Endothelial cell of umbilical vein (primary cell): ENCODE measurements at regions of chr4 and their contacts with region 1.

Region 1: DNA sequence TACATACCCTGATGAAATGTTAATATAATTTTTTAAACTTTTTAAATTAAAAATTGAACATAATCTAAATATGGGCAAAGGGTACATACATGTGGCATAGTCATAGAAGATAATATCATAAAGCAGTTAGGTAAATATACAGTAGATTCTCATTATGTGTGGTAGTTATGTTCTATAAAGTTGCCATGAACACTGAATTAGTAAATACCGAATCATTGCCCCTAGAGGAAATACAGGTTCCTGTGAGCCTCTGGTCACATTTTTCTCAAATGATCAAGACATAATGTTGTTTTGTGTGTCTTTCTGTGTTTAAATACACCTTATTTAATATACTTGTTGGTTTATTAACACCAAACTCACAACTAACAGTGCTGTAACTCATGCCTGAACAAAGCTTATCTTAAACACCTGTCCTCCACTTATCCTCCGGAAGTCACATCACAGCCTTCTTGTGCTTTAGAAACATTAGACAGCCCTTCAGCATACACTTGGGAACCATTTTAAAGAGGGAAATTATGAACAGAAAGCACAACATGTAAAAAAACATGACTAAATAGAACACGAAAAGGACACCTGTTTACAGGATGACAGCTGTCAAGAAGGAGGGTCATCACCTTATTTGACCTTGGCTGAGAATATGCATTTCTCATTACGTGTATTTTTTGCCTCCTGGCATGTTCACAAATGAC is 169.4 kb upstream of the NAP1L5 start:
- DNase-seq: peak; percentile 83
- H3K4me3 ChIP-seq: no peak overlapping the region
- H3K27ac ChIP-seq: peak overlapping the region; percentile 84
- H3K4me1 ChIP-seq: peaks cover 38% of the 10 kb centered on the region
- H3K27me3 ChIP-seq: no peaks in the 10 kb centered on the region
- CTCF ChIP-seq: no peak
- POLR2A ChIP-seq: no peak

Region 2: DNA sequence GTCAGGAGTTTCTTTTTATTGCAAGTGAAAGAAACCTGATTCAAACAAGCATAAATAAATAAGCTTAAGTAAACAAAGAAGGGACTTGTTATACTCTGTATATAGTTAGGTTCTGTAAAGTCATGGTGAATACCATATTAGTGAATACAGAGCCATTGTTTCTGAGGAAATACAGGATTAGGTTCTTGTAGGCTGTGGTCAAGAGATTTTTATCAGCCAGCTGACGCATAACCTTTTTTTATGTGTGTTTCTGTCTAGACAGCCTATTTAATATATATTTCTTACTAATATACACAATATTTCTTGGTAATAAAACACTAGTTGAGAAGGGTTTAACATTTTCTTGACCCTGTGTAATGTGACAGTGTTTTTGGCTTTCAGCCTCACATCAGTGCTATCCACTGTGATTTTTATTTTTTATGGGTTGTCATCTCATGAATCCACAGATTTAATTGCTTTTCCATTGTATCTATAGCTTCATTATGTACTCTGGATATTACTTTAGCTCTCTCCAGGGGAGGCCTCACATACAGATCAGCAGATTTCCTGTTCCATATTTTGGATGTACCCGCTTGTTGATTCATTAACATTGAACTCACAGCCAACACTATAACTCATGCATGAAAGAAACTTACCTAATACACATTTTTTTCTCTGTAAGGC is 266.7 kb before region 1 on chr4:
- CTCF ChIA-PET with region 1: no interaction called
- POLR2A ChIA-PET with region 1: no interaction called
- dilution Hi-C with region 1: no loop called
- intact Hi-C with region 1: loop called (anchors 10 kb)
- DNase-seq: peak; percentile 92
- H3K4me3 ChIP-seq: peak overlapping the region in 2 of 3 experiments; percentile 4 to 21
- H3K27ac ChIP-seq: peak overlapping the region; percentile 100
- H3K4me1 ChIP-seq: peaks cover 32% of the 10 kb centered on the region
- H3K27me3 ChIP-seq: no peaks in the 10 kb centered on the region
- CTCF ChIP-seq: no peak
- POLR2A ChIP-seq: peak; percentile 27

Region 3: DNA sequence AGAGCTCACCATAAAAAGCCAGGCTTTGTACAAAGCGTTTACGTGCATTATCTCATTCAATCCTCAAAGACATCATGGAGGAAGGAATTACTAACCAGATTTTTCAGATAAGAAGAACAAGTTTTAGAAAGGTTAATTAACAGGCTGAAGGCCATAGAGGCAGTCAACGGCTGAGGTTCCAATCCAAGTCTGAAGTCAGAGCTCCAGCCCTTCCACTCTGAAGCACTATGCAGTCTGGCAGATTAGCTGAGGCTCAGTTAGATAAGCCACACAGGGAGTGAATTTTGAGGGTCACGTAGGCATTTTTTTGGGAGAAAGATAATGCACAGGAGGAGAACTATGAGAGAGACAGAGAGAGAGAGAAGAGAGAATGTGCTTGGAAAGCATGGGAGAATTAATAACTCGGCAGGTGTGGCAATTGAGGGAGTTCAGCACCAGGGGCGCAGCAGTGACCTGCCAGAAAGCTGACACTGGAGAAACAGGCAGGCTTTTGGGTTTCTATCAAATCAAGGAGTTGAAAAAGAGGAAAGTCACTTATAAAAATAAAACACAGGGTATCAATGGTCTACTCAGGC is 52.9 kb before region 1 on chr4:
- CTCF ChIA-PET with region 1: no interaction called
- POLR2A ChIA-PET with region 1: no interaction called
- dilution Hi-C with region 1: no loop called
- intact Hi-C with region 1: no loop called
- DNase-seq: no peak
- H3K4me3 ChIP-seq: no peak overlapping the region
- H3K27ac ChIP-seq: no peak overlapping the region
- H3K4me1 ChIP-seq: no peaks in the 10 kb centered on the region
- H3K27me3 ChIP-seq: no peaks in the 10 kb centered on the region
- CTCF ChIP-seq: no peak
- POLR2A ChIP-seq: no peak

Region 4: GRCh38 chr4:88843067-88843685 is 23.8 kb before region 1 on chr4:
- CTCF ChIA-PET with region 1: no interaction called
- POLR2A ChIA-PET with region 1: no interaction called
- dilution Hi-C with region 1: no loop called
- intact Hi-C with region 1: loop called (anchors 2 kb)
- DNase-seq: peak; percentile 87
- H3K4me3 ChIP-seq: no peak overlapping the region
- H3K27ac ChIP-seq: no peak overlapping the region
- H3K4me1 ChIP-seq: peaks cover 11% of the 10 kb centered on the region
- H3K27me3 ChIP-seq: peaks cover 0 to 3% of the 10 kb centered on the region in 2 experiments
- CTCF ChIP-seq: no peak
- POLR2A ChIP-seq: no peak

Region 5: DNA sequence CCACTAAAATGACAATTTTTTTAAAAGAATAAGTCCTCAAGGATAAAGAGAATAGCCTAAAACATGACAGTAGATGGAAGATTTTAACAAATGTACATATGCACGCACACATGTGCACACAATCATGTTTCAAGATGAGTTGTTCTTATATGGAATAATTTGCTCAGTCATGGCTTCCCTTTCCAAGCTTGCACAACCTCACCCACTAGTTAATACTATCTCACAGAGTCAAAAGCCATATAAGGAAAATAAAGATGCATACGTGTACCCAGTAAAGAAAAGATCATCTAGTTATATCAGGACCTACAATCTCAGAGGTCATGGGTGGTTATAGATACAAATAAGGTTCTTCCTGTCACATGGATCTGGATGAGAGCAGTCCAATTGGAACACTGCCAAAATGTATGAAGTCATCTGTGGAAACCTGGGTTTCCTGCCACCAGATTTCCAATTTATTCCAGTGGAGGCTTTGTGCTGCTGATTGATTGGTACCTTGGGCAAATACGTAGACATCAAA is 133.9 kb after region 1 on chr4:
- CTCF ChIA-PET with region 1: no interaction called
- POLR2A ChIA-PET with region 1: no interaction called
- dilution Hi-C with region 1: no loop called
- intact Hi-C with region 1: loop called (anchors 5 kb)
- DNase-seq: peak; percentile 72
- H3K4me3 ChIP-seq: no peak overlapping the region
- H3K27ac ChIP-seq: no peak overlapping the region
- H3K4me1 ChIP-seq: peaks cover 4% of the 10 kb centered on the region
- H3K27me3 ChIP-seq: no peaks in the 10 kb centered on the region
- CTCF ChIP-seq: no peak
- POLR2A ChIP-seq: no peak

Region 6: GRCh38 chr4:89021062-89021461 is 154.1 kb after region 1 on chr4:
- CTCF ChIA-PET with region 1: no interaction called
- POLR2A ChIA-PET with region 1: no interaction called
- dilution Hi-C with region 1: no loop called
- intact Hi-C with region 1: no loop called
- DNase-seq: no peak
- H3K4me3 ChIP-seq: no peak overlapping the region
- H3K27ac ChIP-seq: no peak overlapping the region
- H3K4me1 ChIP-seq: no peaks in the 10 kb centered on the region
- H3K27me3 ChIP-seq: no peaks in the 10 kb centered on the region
- CTCF ChIP-seq: no peak
- POLR2A ChIP-seq: no peak